Mammary epithelial cell (primary cell): ENCODE measurements at regions of chr9 and their contacts with region 1.

Region 1: GRCh38 chr9:70553707-70554673 is 139.5 kb upstream of the KLF9 start:
- DNase-seq: peak; percentile 80
- H3K4me3 ChIP-seq: no peak overlapping the region
- H3K27ac ChIP-seq: peak overlapping the region; percentile 76
- H3K4me1 ChIP-seq: peaks cover 16% of the 10 kb centered on the region
- H3K27me3 ChIP-seq: no peaks in the 10 kb centered on the region
- CTCF ChIP-seq: no peak

Region 2: GRCh38 chr9:70542311-70542931 is 11.6 kb before region 1 on chr9:
- CTCF ChIA-PET with region 1: no interaction called
- dilution Hi-C with region 1: no loop called
- in situ Hi-C with region 1: no loop called
- intact Hi-C with region 1: loop called (anchors 1 kb)
- DNase-seq: no peak
- H3K4me3 ChIP-seq: no peak overlapping the region
- H3K27ac ChIP-seq: no peak overlapping the region
- H3K4me1 ChIP-seq: no peaks in the 10 kb centered on the region
- H3K27me3 ChIP-seq: no peaks in the 10 kb centered on the region
- CTCF ChIP-seq: no peak

Region 3: DNA sequence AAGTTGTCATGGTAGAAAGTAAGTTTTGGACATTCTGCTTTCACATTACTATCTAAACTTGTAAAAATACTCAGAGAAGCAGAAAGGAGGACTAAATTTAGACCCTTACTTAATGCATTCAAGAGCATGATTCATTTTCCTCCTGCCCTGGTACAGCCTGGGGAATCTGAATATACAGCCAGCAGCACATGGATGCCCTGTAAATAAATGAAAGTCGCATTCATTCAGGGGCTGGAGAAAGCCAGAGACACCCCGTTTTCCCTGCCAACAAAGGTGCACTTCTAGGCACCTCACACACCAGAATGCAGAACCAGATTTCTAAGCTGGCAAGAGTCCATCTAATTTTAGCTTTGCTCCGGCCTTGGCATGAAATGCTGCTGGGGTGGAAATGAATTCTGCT is 33.2 kb after region 1 on chr9:
- CTCF ChIA-PET with region 1: no interaction called
- dilution Hi-C with region 1: no loop called
- in situ Hi-C with region 1: no loop called
- intact Hi-C with region 1: no loop called
- DNase-seq: no peak
- H3K4me3 ChIP-seq: no peak overlapping the region
- H3K27ac ChIP-seq: no peak overlapping the region
- H3K4me1 ChIP-seq: peaks cover 16% of the 10 kb centered on the region
- H3K27me3 ChIP-seq: no peaks in the 10 kb centered on the region
- CTCF ChIP-seq: no peak

Region 4: GRCh38 chr9:71602652-71603051 is 1048.7 kb after region 1 on chr9:
- CTCF ChIA-PET with region 1: no interaction called
- dilution Hi-C with region 1: no loop called
- in situ Hi-C with region 1: no loop called
- intact Hi-C with region 1: no loop called
- DNase-seq: no peak
- H3K4me3 ChIP-seq: no peak overlapping the region
- H3K27ac ChIP-seq: no peak overlapping the region
- H3K4me1 ChIP-seq: no peaks in the 10 kb centered on the region
- H3K27me3 ChIP-seq: no peaks in the 10 kb centered on the region
- CTCF ChIP-seq: no peak